Activated CD8-positive, alpha-beta T cell treated with anti-CD3 and anti-CD28 coated beads for 36 hours (primary cell): ENCODE measurements at regions of chr20 and their contacts with region 1.

Region 1: GRCh38 chr20:52312132-52312729 is 120.7 kb upstream of the ZFP64 start:
- DNase-seq: peak; percentile 68
- ATAC-seq: peak; percentile 56
- H3K4me3 Mint-ChIP-seq: no peak overlapping the region
- H3K27ac Mint-ChIP-seq: no peak overlapping the region
- H3K4me1 Mint-ChIP-seq: peaks cover 13% of the 10 kb centered on the region
- H3K27me3 Mint-ChIP-seq: no peaks in the 10 kb centered on the region
- CTCF ChIP-seq: peak; percentile 72

Region 2: DNA sequence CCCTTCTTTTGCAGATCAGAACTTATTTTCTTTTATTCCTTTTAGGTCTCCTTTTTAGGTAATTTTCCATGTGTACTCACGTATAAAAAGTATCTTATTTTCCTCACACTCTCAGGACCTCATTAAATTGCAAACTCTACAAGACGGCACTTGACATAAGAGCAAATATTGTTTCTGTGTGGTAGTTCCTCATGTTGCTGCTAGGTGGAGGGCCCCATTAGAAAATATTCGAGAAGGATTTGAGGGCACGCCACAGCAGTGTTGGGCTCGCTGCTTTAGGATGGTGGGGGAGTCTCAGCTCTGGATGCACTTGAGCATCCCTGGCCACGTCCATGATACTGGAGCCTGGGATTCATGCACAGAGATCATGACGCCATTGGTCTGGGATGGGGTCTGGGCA is 55.8 kb before region 1 on chr20:
- CTCF ChIA-PET with region 1: no interaction called
- POLR2A ChIA-PET with region 1: no interaction called
- intact Hi-C with region 1: no loop called
- DNase-seq: no peak
- ATAC-seq: no peak
- H3K4me3 Mint-ChIP-seq: no peak overlapping the region
- H3K27ac Mint-ChIP-seq: no peak overlapping the region
- H3K4me1 Mint-ChIP-seq: no peaks in the 10 kb centered on the region
- H3K27me3 Mint-ChIP-seq: peaks cover 8% of the 10 kb centered on the region
- CTCF ChIP-seq: no peak

Region 3: GRCh38 chr20:52295556-52295955 is 16.7 kb before region 1 on chr20:
- CTCF ChIA-PET with region 1: interaction called, 14 read pairs
- POLR2A ChIA-PET with region 1: no interaction called
- intact Hi-C with region 1: no loop called
- DNase-seq: no peak
- ATAC-seq: no peak
- H3K4me3 Mint-ChIP-seq: no peak overlapping the region
- H3K27ac Mint-ChIP-seq: no peak overlapping the region
- H3K4me1 Mint-ChIP-seq: no peaks in the 10 kb centered on the region
- H3K27me3 Mint-ChIP-seq: no peaks in the 10 kb centered on the region
- CTCF ChIP-seq: no peak

Region 4: GRCh38 chr20:52342913-52343312 is 30.7 kb after region 1 on chr20:
- CTCF ChIA-PET with region 1: interaction called, 12 read pairs
- POLR2A ChIA-PET with region 1: no interaction called
- intact Hi-C with region 1: no loop called
- DNase-seq: no peak
- ATAC-seq: no peak
- H3K4me3 Mint-ChIP-seq: no peak overlapping the region
- H3K27ac Mint-ChIP-seq: no peak overlapping the region
- H3K4me1 Mint-ChIP-seq: no peaks in the 10 kb centered on the region
- H3K27me3 Mint-ChIP-seq: no peaks in the 10 kb centered on the region
- CTCF ChIP-seq: no peak

Region 5: DNA sequence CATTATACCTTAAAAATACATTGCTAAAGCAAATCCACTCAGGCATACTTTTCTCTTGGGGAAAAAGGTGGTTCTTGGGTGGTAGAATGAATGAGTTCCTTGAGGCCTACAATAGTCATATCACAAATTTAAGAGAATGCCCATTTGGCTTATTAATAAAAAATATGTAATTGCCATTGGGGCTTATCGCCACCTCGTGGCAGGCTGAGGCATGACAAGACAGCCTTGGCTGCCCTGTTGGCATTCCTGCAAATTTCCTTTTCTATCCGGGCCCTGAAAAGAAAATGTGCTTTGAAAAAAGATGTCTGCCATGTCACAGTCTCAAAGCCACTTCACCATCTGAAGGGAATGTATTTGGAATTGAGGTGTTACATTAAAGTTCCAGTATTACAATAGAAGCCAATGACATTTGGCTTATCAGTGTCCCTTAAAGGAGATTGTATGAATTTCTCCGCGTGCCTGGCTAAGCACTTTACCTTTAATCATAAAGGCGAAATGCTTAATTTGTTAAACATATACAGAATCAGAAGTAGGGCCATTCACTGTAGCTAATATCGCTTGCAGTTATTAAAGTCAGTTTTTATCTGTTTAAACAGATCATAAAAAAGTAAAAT is 67.6 kb after region 1 on chr20:
- CTCF ChIA-PET with region 1: interaction called, 21 read pairs
- POLR2A ChIA-PET with region 1: no interaction called
- intact Hi-C with region 1: loop called (anchors 5 kb)
- DNase-seq: peak; percentile 42
- ATAC-seq: no peak
- H3K4me3 Mint-ChIP-seq: no peak overlapping the region
- H3K27ac Mint-ChIP-seq: no peak overlapping the region
- H3K4me1 Mint-ChIP-seq: peaks cover 7% of the 10 kb centered on the region
- H3K27me3 Mint-ChIP-seq: no peaks in the 10 kb centered on the region
- CTCF ChIP-seq: peak; percentile 99

Region 6: GRCh38 chr20:52880997-52881396 is 568.8 kb after region 1 on chr20:
- CTCF ChIA-PET with region 1: no interaction called
- POLR2A ChIA-PET with region 1: no interaction called
- intact Hi-C with region 1: no loop called
- DNase-seq: no peak
- ATAC-seq: no peak
- H3K4me3 Mint-ChIP-seq: no peak overlapping the region
- H3K27ac Mint-ChIP-seq: no peak overlapping the region
- H3K4me1 Mint-ChIP-seq: no peaks in the 10 kb centered on the region
- H3K27me3 Mint-ChIP-seq: peaks cover 4% of the 10 kb centered on the region
- CTCF ChIP-seq: no peak

Region 7: DNA sequence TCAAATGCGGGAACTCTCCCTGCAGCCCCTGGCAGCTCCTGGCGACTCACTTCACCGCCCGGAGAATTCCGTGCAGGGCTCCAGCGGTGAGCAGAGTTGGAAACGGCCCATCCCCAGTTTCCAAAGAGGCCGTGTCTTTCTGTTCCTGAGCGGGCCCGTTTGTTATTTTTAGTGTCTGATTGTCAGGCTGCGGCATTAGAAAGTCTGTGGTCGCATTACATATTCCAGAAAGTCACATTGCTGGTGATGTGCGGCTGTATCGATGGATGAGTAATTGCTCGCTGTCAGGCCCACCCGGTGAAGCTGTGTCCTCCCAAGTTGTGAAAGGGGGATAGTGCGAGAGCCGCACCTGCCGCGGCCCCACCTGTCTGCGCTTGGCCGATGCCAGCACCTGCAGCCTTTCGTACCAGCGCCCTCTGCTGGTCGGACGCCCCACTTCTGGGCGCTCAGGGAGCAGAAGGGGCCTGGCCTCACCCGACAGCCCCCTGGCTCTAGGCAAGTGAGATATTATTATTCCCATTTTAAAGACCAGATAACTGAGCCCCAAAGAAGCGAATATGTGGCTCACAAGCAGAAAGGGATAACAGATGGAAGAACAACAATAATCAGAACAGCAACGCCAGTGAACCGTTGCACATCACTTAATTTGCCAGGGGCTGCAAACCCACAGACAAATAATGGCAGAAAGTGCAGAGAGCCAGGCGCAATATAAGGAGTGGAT is 904.8 kb after region 1 on chr20:
- CTCF ChIA-PET with region 1: interaction called, 7 read pairs
- POLR2A ChIA-PET with region 1: no interaction called
- intact Hi-C with region 1: loop called (anchors 10 kb)
- DNase-seq: peak; percentile 82
- ATAC-seq: peak; percentile 70
- H3K4me3 Mint-ChIP-seq: no peak overlapping the region
- H3K27ac Mint-ChIP-seq: no peak overlapping the region
- H3K4me1 Mint-ChIP-seq: peaks cover 17% of the 10 kb centered on the region
- H3K27me3 Mint-ChIP-seq: peaks cover 1% of the 10 kb centered on the region
- CTCF ChIP-seq: peak; percentile 97